H1 (cell line): ENCODE measurements at regions of chr7 and their contacts with region 1.

Region 1: GRCh38 chr7:142853739-142854371 is 1.0 kb upstream of the EPHB6 start:
- DNase-seq: peak; percentile 49 to 72
- H3K4me3 ChIP-seq: peak overlapping the region; percentile 83 to 97 (median 92)
- H3K27ac ChIP-seq: no peak overlapping the region
- H3K4me1 ChIP-seq: peaks cover 0 to 12% (median 4%) of the 10 kb centered on the region in 4 experiments; a peak in 4 of 7 replicates
- H3K27me3 ChIP-seq: peaks cover 0 to 12% (median 6%) of the 10 kb centered on the region in 4 experiments; a peak in 4 of 7 replicates
- CTCF ChIP-seq: peak; percentile 68 to 84 (median 79)
- EP300 ChIP-seq: no peak
- POLR2A ChIP-seq: no peak
- RAD21 ChIP-seq: peak; percentile 77 to 87

Region 2: GRCh38 chr7:142796608-142797385 is 57.1 kb before region 1 on chr7:
- CTCF ChIA-PET with region 1: interaction called, 10 read pairs
- POLR2A ChIA-PET with region 1: interaction called, 4 read pairs
- DNase-seq: peak in 1 of 2 experiments; percentile 64
- H3K4me3 ChIP-seq: peak overlapping the region; percentile 51 to 80 (median 69)
- H3K27ac ChIP-seq: no peak overlapping the region
- H3K4me1 ChIP-seq: peaks cover 14 to 30% (median 17%) of the 10 kb centered on the region in 4 experiments
- H3K27me3 ChIP-seq: peaks cover 1 to 36% (median 26%) of the 10 kb centered on the region in 4 experiments; a peak in 6 of 7 replicates
- CTCF ChIP-seq: no peak
- EP300 ChIP-seq: no peak
- POLR2A ChIP-seq: peak; percentile 21 to 43; a peak in 1 of 3 replicates
- RAD21 ChIP-seq: no peak

Region 3: GRCh38 chr7:142866361-142867058 is 12.7 kb after region 1 on chr7:
- CTCF ChIA-PET with region 1: interaction called, 107 read pairs
- POLR2A ChIA-PET with region 1: interaction called, 4 read pairs
- DNase-seq: peak in 1 of 2 experiments; percentile 82
- H3K4me3 ChIP-seq: no peak overlapping the region
- H3K27ac ChIP-seq: no peak overlapping the region
- H3K4me1 ChIP-seq: peaks cover 3 to 10% (median 9%) of the 10 kb centered on the region in 4 experiments; a peak in 6 of 7 replicates
- H3K27me3 ChIP-seq: no peaks in the 10 kb centered on the region
- CTCF ChIP-seq: peak; percentile 79 to 84 (median 83)
- EP300 ChIP-seq: no peak
- POLR2A ChIP-seq: no peak
- RAD21 ChIP-seq: peak; percentile 67 to 77